ENCODE measurements at regions of chr5 and their contacts with region 1.

Region 1: GRCh38 chr5:14168144-14168792 is 25.1 kb downstream of the TRIO start:
- DNase-seq: no peak
- H3K4me3 ChIP-seq: no peak overlapping the region
- H3K27ac ChIP-seq: no peak overlapping the region
- H3K4me1 ChIP-seq: peaks cover 0 to 4% of the 10 kb centered on the region in 2 donors
- H3K27me3 ChIP-seq: no peaks in the 10 kb centered on the region
- CTCF ChIP-seq: no peak
- POLR2A ChIP-seq: no peak

Region 2: DNA sequence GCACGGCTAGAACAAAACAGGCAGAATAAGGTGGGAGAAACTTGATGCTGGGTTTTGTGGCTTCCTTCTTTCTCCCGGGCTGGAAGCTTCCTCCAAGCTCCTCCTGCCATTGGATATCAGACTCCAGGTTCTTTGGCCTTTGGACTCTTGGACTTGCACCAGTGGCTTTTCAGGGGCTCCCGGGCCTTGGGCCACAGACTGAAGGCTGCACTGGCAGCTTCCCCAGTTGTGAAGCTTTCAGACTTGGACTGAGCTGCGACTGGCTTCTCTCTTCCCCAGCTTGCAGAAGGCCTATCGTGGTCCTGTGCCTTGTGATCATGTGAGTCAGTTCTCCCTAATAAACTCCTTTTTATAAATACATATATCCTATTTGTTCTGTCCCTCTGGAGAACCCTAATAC is 588.2 kb before region 1 on chr5:
- intact Hi-C with region 1: no loop called
- DNase-seq: no peak
- H3K4me3 ChIP-seq: no peak overlapping the region
- H3K27ac ChIP-seq: no peak overlapping the region
- H3K4me1 ChIP-seq: no peaks in the 10 kb centered on the region
- H3K27me3 ChIP-seq: no peaks in the 10 kb centered on the region
- CTCF ChIP-seq: no peak
- POLR2A ChIP-seq: no peak

Region 3: GRCh38 chr5:14142827-14143548 is 25.3 kb before region 1 on chr5 and contains the start of gene TRIO:
- intact Hi-C with region 1: no loop called
- DNase-seq: peak; percentile 88 to 89
- H3K4me3 ChIP-seq: peak within 1 kb of the TSS; percentile 82 to 97 (median 92)
- H3K27ac ChIP-seq: peak within 1 kb of the TSS; percentile 93 to 96
- H3K4me1 ChIP-seq: peaks cover 10 to 22% of the 10 kb centered on the region in 2 donors
- H3K27me3 ChIP-seq: no peaks in the 10 kb centered on the region
- CTCF ChIP-seq: peak in 2 of 3 donors; percentile 37 to 45
- POLR2A ChIP-seq: peak; percentile 21
- total RNA-seq, gene TRIO: 191 to 209 (median 193) TPM

Region 4: GRCh38 chr5:15142458-15142857 is 974.2 kb after region 1 on chr5:
- intact Hi-C with region 1: loop called (anchors 5 kb)
- DNase-seq: no peak
- H3K4me3 ChIP-seq: no peak overlapping the region
- H3K27ac ChIP-seq: no peak overlapping the region
- H3K4me1 ChIP-seq: no peaks in the 10 kb centered on the region
- H3K27me3 ChIP-seq: no peaks in the 10 kb centered on the region
- CTCF ChIP-seq: no peak
- POLR2A ChIP-seq: no peak